T-cell (primary cell): ENCODE measurements at regions of chr5 and their contacts with region 1.

Region 1: GRCh38 chr5:154384480-154385235 is 61.1 kb upstream of the SAP30L start:
- DNase-seq: peak in 25 of 35 experiments; percentile 5 to 66 (median 24)
- ATAC-seq: peak in 2 of 4 experiments; percentile 65 to 73
- H3K4me3 ChIP-seq: no peak overlapping the region
- H3K4me3 Mint-ChIP-seq: peak overlapping the region in 1 of 3 donors; percentile 15
- H3K27ac ChIP-seq: peak overlapping the region; percentile 78
- H3K27ac Mint-ChIP-seq: peak overlapping the region; percentile 66 to 76
- H3K4me1 ChIP-seq: peaks cover 0 to 21% of the 10 kb centered on the region in 2 experiments
- H3K4me1 Mint-ChIP-seq: peaks cover 0 to 22% (median 12%) of the 10 kb centered on the region in 3 donors
- H3K27me3 ChIP-seq: no peaks in the 10 kb centered on the region
- H3K27me3 Mint-ChIP-seq: no peaks in the 10 kb centered on the region

Region 2: GRCh38 chr5:154058055-154059038 is 326.3 kb before region 1 on chr5:
- CTCF ChIA-PET with region 1: no interaction called
- POLR2A ChIA-PET with region 1: no interaction called
- DNase-seq: no peak
- ATAC-seq: peak in 2 of 4 experiments; percentile 30 to 50
- H3K4me3 ChIP-seq: no peak overlapping the region
- H3K4me3 Mint-ChIP-seq: no peak overlapping the region
- H3K27ac ChIP-seq: no peak overlapping the region
- H3K27ac Mint-ChIP-seq: peak overlapping the region; percentile 3 to 18
- H3K4me1 ChIP-seq: peaks cover 0 to 8% of the 10 kb centered on the region in 2 experiments
- H3K4me1 Mint-ChIP-seq: peaks cover 22 to 24% (median 23%) of the 10 kb centered on the region in 3 donors
- H3K27me3 ChIP-seq: no peaks in the 10 kb centered on the region
- H3K27me3 Mint-ChIP-seq: no peaks in the 10 kb centered on the region

Region 3: GRCh38 chr5:154405078-154405792 is 20.6 kb after region 1 on chr5:
- CTCF ChIA-PET with region 1: interaction called in 1 of 2 experiments, 13 read pairs
- POLR2A ChIA-PET with region 1: no interaction called
- DNase-seq: peak; percentile 30 to 79 (median 62)
- ATAC-seq: peak; percentile 92 to 98 (median 94)
- H3K4me3 ChIP-seq: peak overlapping the region in 1 of 2 donors; percentile 35
- H3K4me3 Mint-ChIP-seq: peak overlapping the region; percentile 17 to 70 (median 21)
- H3K27ac ChIP-seq: no peak overlapping the region
- H3K27ac Mint-ChIP-seq: no peak overlapping the region
- H3K4me1 ChIP-seq: peaks cover 0 to 9% of the 10 kb centered on the region in 2 experiments
- H3K4me1 Mint-ChIP-seq: peaks cover 10 to 16% (median 13%) of the 10 kb centered on the region in 3 donors
- H3K27me3 ChIP-seq: no peaks in the 10 kb centered on the region
- H3K27me3 Mint-ChIP-seq: no peaks in the 10 kb centered on the region